PC-3 (cell line): ENCODE measurements at regions of chr12 and their contacts with region 1.

Region 1: DNA sequence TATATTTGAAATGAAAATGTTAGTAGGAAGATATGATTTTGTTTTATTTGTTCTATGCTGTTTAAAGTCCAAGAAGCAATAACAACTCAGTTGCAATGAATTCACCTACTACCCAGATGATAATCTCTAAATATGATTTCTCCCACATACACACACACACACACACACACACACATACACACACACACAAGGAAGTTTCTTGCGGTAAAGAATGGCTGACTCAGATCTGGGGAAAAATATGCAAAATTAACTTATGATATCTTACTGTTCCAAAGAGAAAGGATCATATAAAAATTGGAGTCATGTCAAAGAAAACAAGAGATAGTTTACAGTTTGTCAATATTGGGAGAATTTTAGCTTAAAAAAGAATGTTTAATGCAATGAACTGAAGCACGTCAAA is 456.7 kb downstream of the SLC16A7 start:
- DNase-seq: peak; percentile 64
- ATAC-seq: peak; percentile 71
- H3K4me3 ChIP-seq: no peak overlapping the region
- H3K27ac ChIP-seq: 0 out of 2 replicates have a peak overlapping the region, but pooled peaks have one; percentile 6
- H3K4me1 ChIP-seq: peaks cover 13% of the 10 kb centered on the region
- H3K27me3 ChIP-seq: no peaks in the 10 kb centered on the region
- CTCF ChIP-seq: no peak

Region 2: DNA sequence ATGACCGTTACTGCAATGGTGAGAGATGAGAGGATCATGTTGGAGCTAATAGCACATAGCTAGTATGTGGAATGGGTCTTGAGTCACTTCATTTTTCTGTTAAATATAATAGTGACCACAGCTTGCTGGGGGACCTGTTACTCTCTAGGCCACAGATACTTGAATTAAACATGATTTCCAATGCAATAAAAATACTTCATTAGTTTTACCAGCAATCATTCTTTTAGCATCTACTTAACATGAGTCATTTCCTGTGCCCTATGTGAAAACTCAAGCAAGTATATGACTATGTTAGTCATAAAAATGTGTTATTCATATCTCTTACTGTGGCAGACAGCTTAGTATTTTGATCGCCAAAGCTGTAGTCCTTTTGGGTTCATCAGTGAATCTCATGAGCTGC is 342.2 kb after region 1 on chr12:
- CTCF ChIA-PET with region 1: no interaction called
- POLR2A ChIA-PET with region 1: no interaction called
- intact Hi-C with region 1: no loop called
- DNase-seq: peak; percentile 83
- ATAC-seq: peak; percentile 96
- H3K4me3 ChIP-seq: no peak overlapping the region
- H3K27ac ChIP-seq: peak overlapping the region; percentile 49
- H3K4me1 ChIP-seq: peaks cover 27% of the 10 kb centered on the region
- H3K27me3 ChIP-seq: no peaks in the 10 kb centered on the region
- CTCF ChIP-seq: no peak

Region 3: DNA sequence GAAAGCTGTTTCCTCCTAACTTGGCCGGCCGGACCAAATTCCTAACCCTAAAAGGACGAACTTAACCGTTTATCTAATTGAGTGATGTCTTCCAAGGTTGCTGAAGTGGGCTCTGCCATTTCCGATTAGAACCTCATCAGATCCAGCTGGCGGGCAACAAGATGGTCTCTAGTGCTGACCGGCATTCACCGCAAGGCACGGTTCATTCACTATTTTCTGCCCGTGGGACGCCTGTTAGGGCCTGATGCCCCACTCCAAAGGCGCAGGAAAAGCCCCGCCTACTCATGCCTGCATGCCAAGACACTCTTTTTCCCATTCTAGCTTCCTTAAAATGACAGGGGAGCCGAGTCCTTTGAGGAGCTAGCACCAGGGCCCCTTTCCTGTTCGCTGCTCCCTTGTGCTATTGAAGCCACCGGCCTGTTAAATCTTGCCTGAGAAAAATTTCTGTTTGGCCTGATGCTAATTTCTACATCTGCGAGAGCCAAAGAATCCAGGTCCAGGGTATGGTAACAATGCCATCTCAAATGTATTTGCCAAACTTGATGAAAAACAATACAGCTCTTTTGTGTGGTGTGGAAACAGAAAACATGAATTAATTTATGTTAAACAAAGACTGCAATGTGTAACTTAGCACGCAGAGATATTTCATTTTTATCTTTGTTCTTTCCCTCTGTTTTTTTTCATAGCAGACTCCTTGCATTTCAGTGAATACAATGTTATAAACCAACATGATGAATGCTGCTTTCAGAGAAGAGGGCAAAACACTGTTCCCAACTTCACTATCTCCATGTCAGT is 1136.5 kb after region 1 on chr12:
- CTCF ChIA-PET with region 1: no interaction called
- POLR2A ChIA-PET with region 1: interaction called, 19 read pairs
- intact Hi-C with region 1: no loop called
- DNase-seq: no peak
- ATAC-seq: no peak
- H3K4me3 ChIP-seq: no peak overlapping the region
- H3K27ac ChIP-seq: no peak overlapping the region
- H3K4me1 ChIP-seq: no peaks in the 10 kb centered on the region
- H3K27me3 ChIP-seq: no peaks in the 10 kb centered on the region
- CTCF ChIP-seq: no peak